ENCODE measurements at regions of chr6 and their contacts with region 1.

Region 1: DNA sequence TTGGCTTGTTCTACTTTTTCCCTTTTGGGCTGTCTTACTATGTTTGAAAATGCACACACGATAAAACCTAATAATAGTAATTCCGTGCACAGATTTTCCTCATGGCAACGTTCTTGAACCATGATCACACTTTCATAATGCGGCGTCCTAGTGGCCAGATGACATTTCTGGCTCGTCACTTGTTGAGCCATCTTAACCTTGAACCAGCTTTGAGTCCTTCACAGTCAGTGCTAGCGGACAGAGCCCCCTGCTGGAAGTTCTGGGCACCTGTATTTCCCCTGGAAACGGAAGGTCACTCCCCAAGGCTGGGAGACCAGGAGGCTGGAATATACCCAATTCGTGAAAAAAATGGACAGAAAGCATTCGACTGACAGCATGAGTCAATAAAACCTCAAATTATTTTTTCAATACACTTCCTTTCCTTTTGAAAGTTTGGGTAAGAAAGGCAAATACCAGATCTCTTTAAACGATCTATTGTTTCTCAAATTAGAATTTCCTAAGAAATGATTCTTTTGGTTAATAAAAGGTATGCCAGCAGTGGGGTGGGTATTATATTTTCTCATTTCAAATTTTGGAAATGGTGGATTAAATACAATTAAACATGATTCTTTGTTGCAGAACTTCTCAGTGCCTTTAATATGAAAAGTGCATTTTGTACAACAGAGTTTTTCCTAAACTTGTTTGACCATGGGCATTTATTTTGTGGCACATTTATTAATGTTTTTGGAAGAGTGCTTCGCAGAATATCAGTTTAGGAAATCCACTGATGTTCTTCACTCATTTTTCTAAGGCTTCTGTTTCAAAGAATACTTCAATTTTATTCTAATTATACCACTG is 542.3 kb downstream of the QKI start:
- DNase-seq: peak; percentile 72
- H3K4me3 Mint-ChIP-seq: no peak overlapping the region
- H3K27ac Mint-ChIP-seq: no peak overlapping the region
- H3K4me1 Mint-ChIP-seq: no peaks in the 10 kb centered on the region
- H3K27me3 Mint-ChIP-seq: peaks cover 29% of the 10 kb centered on the region

Region 2: GRCh38 chr6:162907876-162908481 is 1048.8 kb before region 1 on chr6:
- CTCF ChIA-PET with region 1: no interaction called
- intact Hi-C with region 1: loop called (anchors 1 kb)
- DNase-seq: no peak
- H3K4me3 Mint-ChIP-seq: no peak overlapping the region
- H3K27ac Mint-ChIP-seq: no peak overlapping the region
- H3K4me1 Mint-ChIP-seq: no peaks in the 10 kb centered on the region
- H3K27me3 Mint-ChIP-seq: peaks cover 5% of the 10 kb centered on the region

Region 3: DNA sequence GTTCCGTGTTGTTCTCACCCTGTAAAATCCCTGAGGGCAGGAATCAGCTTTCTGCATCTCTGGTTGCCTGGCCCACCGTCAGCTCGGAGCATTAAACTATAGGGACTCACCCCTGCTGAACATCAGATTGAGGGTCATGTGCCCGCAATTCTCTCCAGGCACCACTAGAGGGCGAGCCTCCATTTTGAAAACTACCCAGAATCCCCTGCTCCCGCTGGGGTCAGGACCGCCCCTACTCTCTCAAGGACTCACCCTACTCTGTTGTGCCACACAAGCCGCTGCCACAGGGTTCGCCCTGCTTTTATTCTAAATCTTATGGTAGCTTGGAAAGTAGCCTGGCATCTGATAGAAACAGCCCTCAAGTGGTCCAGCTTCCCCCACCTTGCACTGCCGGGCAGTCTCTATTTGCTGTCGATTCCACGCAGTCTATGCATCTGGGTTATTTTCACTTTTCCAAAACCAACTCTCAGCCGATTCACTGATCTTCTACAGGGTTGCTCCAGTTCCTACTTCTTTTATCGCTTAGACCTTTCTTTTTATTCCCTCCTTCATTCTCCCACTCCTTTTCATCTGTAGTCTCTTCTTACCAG is 786.4 kb before region 1 on chr6:
- CTCF ChIA-PET with region 1: interaction called, 4 read pairs
- intact Hi-C with region 1: loop called (anchors 2 kb)
- DNase-seq: peak; percentile 33
- H3K4me3 Mint-ChIP-seq: no peak overlapping the region
- H3K27ac Mint-ChIP-seq: no peak overlapping the region
- H3K4me1 Mint-ChIP-seq: no peaks in the 10 kb centered on the region
- H3K27me3 Mint-ChIP-seq: peaks cover 7% of the 10 kb centered on the region

Region 4: DNA sequence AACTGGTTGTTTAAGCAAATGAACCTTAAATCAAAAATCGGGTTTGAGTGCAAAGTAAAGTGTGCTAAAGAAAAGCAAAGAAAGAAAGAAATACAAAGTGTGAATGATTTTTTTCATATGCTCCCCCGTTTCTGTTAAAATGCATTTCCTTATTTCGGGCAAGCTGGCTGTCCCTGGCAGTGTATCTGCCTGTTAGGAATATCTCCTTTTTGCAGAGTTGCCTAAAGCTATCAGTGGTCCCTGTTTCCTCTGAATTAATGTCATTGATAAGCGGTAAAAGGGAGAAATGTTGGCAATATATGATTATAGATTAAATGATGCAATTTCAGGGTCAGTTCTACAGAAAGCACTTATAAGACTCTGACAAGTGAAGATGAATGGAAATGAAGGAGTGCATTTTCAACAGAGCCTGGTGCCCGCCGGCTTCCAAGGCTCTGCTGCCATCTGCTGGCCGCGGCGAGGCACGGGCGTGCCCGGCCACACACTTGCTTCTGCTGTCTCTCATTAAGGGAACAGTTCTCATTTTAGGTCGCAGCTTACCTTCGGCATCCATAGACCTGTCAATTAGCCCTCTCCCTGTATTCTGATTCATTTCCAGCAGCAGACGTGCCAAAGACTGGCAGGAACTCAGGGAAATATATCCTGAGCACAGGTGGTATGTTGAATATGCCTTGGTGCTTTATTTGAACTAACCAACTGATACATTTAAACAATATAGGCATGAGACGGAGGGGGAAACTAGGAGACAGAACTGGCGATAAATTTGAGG is 970.7 kb after region 1 on chr6:
- CTCF ChIA-PET with region 1: no interaction called
- intact Hi-C with region 1: loop called (anchors 2 kb)
- DNase-seq: peak; percentile 61
- H3K4me3 Mint-ChIP-seq: no peak overlapping the region
- H3K27ac Mint-ChIP-seq: no peak overlapping the region
- H3K4me1 Mint-ChIP-seq: no peaks in the 10 kb centered on the region
- H3K27me3 Mint-ChIP-seq: no peaks in the 10 kb centered on the region